H1 (cell line): ENCODE measurements at regions of chr14 and their contacts with region 1.

Region 1: GRCh38 chr14:51219473-51220448 is 20.3 kb upstream of the TMX1 start:
- DNase-seq: no peak
- H3K4me3 ChIP-seq: no peak overlapping the region
- H3K27ac ChIP-seq: no peak overlapping the region
- H3K4me1 ChIP-seq: no peaks in the 10 kb centered on the region
- H3K27me3 ChIP-seq: no peaks in the 10 kb centered on the region
- CTCF ChIP-seq: peak in 2 of 3 experiments; percentile 31 to 43; a peak in 2 of 4 replicates
- EP300 ChIP-seq: no peak
- POLR2A ChIP-seq: no peak
- RAD21 ChIP-seq: peak; percentile 53 to 64

Region 2: GRCh38 chr14:51157012-51157411 is 62.7 kb before region 1 on chr14:
- CTCF ChIA-PET with region 1: interaction called, 10 read pairs
- POLR2A ChIA-PET with region 1: no interaction called
- DNase-seq: no peak
- H3K4me3 ChIP-seq: no peak overlapping the region
- H3K27ac ChIP-seq: no peak overlapping the region
- H3K4me1 ChIP-seq: no peaks in the 10 kb centered on the region
- H3K27me3 ChIP-seq: no peaks in the 10 kb centered on the region
- CTCF ChIP-seq: peak in 2 of 3 experiments; percentile 40 to 63; a peak in 2 of 4 replicates
- EP300 ChIP-seq: no peak
- POLR2A ChIP-seq: no peak
- RAD21 ChIP-seq: peak; percentile 71 to 79

Region 3: GRCh38 chr14:51209457-51209856 is 10.3 kb before region 1 on chr14:
- CTCF ChIA-PET with region 1: interaction called, 18 read pairs
- POLR2A ChIA-PET with region 1: no interaction called
- DNase-seq: no peak
- H3K4me3 ChIP-seq: no peak overlapping the region
- H3K27ac ChIP-seq: no peak overlapping the region
- H3K4me1 ChIP-seq: no peaks in the 10 kb centered on the region
- H3K27me3 ChIP-seq: no peaks in the 10 kb centered on the region
- CTCF ChIP-seq: no peak
- EP300 ChIP-seq: no peak
- POLR2A ChIP-seq: no peak
- RAD21 ChIP-seq: no peak